ENCODE measurements at regions of chr14 and their contacts with region 1.

Region 1: DNA sequence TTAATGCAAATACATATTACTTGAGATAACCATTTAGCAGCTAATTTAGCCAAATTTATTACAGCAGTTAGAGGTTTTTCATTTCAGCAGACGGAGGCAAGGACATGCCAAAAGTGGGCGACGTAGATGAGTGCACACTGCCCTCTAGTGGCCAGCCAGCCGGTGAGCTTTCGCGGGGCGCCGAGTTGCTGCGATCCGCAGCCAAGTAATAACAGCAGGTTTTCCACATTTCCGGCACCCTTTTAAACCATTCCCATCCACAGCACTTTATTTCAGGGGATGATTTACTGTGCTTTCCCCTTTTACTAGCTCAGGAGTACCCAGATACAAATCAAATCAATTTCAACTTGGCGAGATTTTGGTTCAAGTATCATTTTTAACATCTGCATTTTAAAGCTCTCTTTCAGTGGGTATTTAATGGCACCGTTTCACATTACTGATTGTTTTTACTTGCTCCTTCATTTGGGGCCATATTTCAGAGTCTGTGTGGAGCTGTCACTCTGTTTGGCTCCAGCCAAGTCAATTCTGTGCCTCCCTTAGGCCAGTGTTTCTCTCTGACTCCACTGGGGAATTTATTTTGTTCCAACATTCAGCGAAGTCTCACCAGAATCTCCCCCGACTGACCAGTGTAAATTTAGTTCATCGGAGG is 158.0 kb downstream of the EGLN3 start:
- DNase-seq: peak; percentile 15
- ATAC-seq: peak; percentile 91
- H3K4me3 ChIP-seq: no peak overlapping the region
- H3K27ac ChIP-seq: no peak overlapping the region
- H3K4me1 ChIP-seq: no peaks in the 10 kb centered on the region
- H3K27me3 ChIP-seq: no peaks in the 10 kb centered on the region
- CTCF ChIP-seq: peak; percentile 91 to 95 (median 93); a peak in 5 of 6 replicates
- EP300 ChIP-seq: no peak
- POLR2A ChIP-seq: no peak
- RAD21 ChIP-seq: peak; percentile 86

Region 2: GRCh38 chr14:32576088-32576795 is 1216.6 kb before region 1 on chr14:
- CTCF ChIA-PET with region 1: interaction called, 9 read pairs
- POLR2A ChIA-PET with region 1: no interaction called
- RAD21 ChIA-PET with region 1: interaction called, 6 read pairs
- SMC1A ChIA-PET with region 1: interaction called, 9 read pairs
- in situ Hi-C with region 1: loop called (anchors 5 kb)
- intact Hi-C with region 1: loop called (anchors 1 kb)
- DNase-seq: no peak
- ATAC-seq: peak; percentile 86
- H3K4me3 ChIP-seq: no peak overlapping the region
- H3K27ac ChIP-seq: no peak overlapping the region
- H3K4me1 ChIP-seq: peaks cover 17% of the 10 kb centered on the region
- H3K27me3 ChIP-seq: no peaks in the 10 kb centered on the region
- CTCF ChIP-seq: peak; percentile 92 to 95 (median 92)
- EP300 ChIP-seq: no peak
- POLR2A ChIP-seq: no peak
- RAD21 ChIP-seq: peak; percentile 98

Region 3: DNA sequence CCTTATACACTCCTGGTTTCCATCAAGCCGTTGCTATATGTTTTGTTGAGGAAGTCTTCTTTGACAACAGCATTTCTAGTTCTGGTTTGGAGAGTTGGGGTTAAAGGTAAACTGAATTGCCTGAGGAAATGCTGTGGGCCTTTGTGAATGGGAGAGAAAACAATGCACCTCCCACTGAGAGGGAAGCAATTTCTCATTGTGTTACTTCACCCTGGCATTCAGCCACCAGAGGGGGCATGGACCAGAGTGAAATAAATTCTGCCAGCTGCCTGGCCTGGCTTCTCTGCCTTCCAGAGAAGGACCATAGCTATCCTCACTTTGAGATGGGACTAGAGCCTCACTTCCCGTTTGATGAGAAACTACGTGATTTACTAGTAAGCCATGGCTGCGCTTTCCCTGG is 317.2 kb before region 1 on chr14:
- CTCF ChIA-PET with region 1: interaction called, 77 read pairs
- POLR2A ChIA-PET with region 1: no interaction called
- RAD21 ChIA-PET with region 1: interaction called, 21 read pairs
- SMC1A ChIA-PET with region 1: interaction called, 50 read pairs
- in situ Hi-C with region 1: loop called (anchors 5 kb)
- intact Hi-C with region 1: loop called (anchors 1 kb)
- DNase-seq: no peak
- ATAC-seq: peak; percentile 77
- H3K4me3 ChIP-seq: no peak overlapping the region
- H3K27ac ChIP-seq: no peak overlapping the region
- H3K4me1 ChIP-seq: no peaks in the 10 kb centered on the region
- H3K27me3 ChIP-seq: no peaks in the 10 kb centered on the region
- CTCF ChIP-seq: peak; percentile 40 to 56 (median 46); a peak in 5 of 6 replicates
- EP300 ChIP-seq: no peak
- POLR2A ChIP-seq: no peak
- RAD21 ChIP-seq: peak; percentile 35; the same call in 1 of the 2 replicates

Region 4: GRCh38 chr14:33534632-33535031 is 258.2 kb before region 1 on chr14:
- CTCF ChIA-PET with region 1: interaction called, 4 read pairs
- POLR2A ChIA-PET with region 1: no interaction called
- RAD21 ChIA-PET with region 1: interaction called, 13 read pairs
- SMC1A ChIA-PET with region 1: interaction called, 10 read pairs
- in situ Hi-C with region 1: no loop called
- intact Hi-C with region 1: no loop called
- DNase-seq: no peak
- ATAC-seq: no peak
- H3K4me3 ChIP-seq: no peak overlapping the region
- H3K27ac ChIP-seq: no peak overlapping the region
- H3K4me1 ChIP-seq: no peaks in the 10 kb centered on the region
- H3K27me3 ChIP-seq: no peaks in the 10 kb centered on the region
- CTCF ChIP-seq: no peak
- EP300 ChIP-seq: no peak
- POLR2A ChIP-seq: no peak
- RAD21 ChIP-seq: no peak

Region 5: GRCh38 chr14:33682740-33683139 is 110.1 kb before region 1 on chr14:
- CTCF ChIA-PET with region 1: interaction called, 334 read pairs
- POLR2A ChIA-PET with region 1: interaction called, 5 read pairs
- RAD21 ChIA-PET with region 1: interaction called, 264 read pairs
- SMC1A ChIA-PET with region 1: interaction called, 29 read pairs
- in situ Hi-C with region 1: no loop called
- intact Hi-C with region 1: no loop called
- DNase-seq: no peak
- ATAC-seq: no peak
- H3K4me3 ChIP-seq: no peak overlapping the region
- H3K27ac ChIP-seq: no peak overlapping the region
- H3K4me1 ChIP-seq: no peaks in the 10 kb centered on the region
- H3K27me3 ChIP-seq: no peaks in the 10 kb centered on the region
- CTCF ChIP-seq: no peak
- EP300 ChIP-seq: no peak
- POLR2A ChIP-seq: no peak
- RAD21 ChIP-seq: no peak

Region 6: DNA sequence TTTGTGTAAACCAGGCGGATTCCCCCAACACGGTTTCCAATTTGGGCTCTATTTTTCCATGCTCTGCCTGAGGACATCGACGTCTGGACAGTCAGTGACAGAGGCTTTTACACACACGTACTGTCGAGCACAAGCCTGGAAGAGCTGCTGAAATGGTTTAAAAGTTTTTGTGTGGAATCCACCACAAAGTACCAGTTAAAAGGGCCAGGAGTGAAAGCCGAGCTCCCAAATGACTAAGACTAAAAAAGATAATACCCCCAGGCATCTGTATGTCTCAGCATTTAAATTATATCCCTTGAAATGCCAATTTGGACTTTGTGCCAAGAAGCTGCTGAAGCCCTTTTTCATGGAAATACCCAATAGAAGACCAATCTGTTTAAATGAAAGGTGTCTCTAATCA is 15.2 kb before region 1 on chr14:
- CTCF ChIA-PET with region 1: interaction called, 7 read pairs
- POLR2A ChIA-PET with region 1: interaction called, 6 read pairs
- RAD21 ChIA-PET with region 1: interaction called, 4 read pairs
- SMC1A ChIA-PET with region 1: interaction called, 15 read pairs
- in situ Hi-C with region 1: no loop called
- intact Hi-C with region 1: no loop called
- DNase-seq: no peak
- ATAC-seq: no peak
- H3K4me3 ChIP-seq: no peak overlapping the region
- H3K27ac ChIP-seq: no peak overlapping the region
- H3K4me1 ChIP-seq: no peaks in the 10 kb centered on the region
- H3K27me3 ChIP-seq: peaks cover 0 to 4% of the 10 kb centered on the region in 2 experiments; a peak in 1 of 4 replicates
- CTCF ChIP-seq: no peak
- EP300 ChIP-seq: no peak
- POLR2A ChIP-seq: no peak
- RAD21 ChIP-seq: no peak

Region 7: DNA sequence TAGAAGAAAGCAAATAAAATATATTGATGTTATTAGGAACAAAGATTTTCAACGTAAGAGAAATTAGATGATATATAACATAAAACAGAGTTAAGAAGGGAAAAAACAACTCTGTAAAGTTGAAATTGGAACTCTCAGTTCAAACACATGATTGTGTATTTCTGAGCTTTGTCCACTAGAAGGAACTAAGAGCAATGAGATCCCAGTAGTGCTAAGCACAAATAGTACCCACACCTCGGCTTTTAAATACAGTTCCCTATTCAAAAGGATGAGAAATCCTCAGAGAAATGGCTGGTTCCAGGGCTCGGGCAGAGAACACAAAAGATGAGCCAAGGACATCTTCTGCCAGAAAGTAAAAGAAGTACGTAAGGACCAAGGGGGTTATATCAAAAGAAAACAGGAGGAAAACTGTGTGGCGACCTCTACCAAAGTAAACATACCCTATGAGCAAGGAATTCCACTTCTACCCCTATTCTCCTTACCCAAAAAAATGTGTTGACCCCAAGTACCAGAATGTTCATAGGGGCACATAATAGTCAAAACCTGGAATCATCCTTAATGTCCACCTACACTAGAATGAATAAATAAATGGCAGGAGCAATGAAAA is 572.6 kb after region 1 on chr14:
- CTCF ChIA-PET with region 1: no interaction called
- POLR2A ChIA-PET with region 1: no interaction called
- RAD21 ChIA-PET with region 1: no interaction called
- SMC1A ChIA-PET with region 1: no interaction called
- in situ Hi-C with region 1: no loop called
- intact Hi-C with region 1: no loop called
- DNase-seq: no peak
- ATAC-seq: 0 out of 3 replicates have a peak, but pooled peaks have one; percentile 25
- H3K4me3 ChIP-seq: no peak overlapping the region
- H3K27ac ChIP-seq: no peak overlapping the region
- H3K4me1 ChIP-seq: no peaks in the 10 kb centered on the region
- H3K27me3 ChIP-seq: no peaks in the 10 kb centered on the region
- CTCF ChIP-seq: peak in 2 of 3 experiments; percentile 11 to 26; a peak in 1 of 6 replicates
- EP300 ChIP-seq: no peak
- POLR2A ChIP-seq: no peak
- RAD21 ChIP-seq: peak; percentile 29; the same call in 1 of the 2 replicates